ENCODE measurements at regions of chr22 and their contacts with region 1.

Region 1: DNA sequence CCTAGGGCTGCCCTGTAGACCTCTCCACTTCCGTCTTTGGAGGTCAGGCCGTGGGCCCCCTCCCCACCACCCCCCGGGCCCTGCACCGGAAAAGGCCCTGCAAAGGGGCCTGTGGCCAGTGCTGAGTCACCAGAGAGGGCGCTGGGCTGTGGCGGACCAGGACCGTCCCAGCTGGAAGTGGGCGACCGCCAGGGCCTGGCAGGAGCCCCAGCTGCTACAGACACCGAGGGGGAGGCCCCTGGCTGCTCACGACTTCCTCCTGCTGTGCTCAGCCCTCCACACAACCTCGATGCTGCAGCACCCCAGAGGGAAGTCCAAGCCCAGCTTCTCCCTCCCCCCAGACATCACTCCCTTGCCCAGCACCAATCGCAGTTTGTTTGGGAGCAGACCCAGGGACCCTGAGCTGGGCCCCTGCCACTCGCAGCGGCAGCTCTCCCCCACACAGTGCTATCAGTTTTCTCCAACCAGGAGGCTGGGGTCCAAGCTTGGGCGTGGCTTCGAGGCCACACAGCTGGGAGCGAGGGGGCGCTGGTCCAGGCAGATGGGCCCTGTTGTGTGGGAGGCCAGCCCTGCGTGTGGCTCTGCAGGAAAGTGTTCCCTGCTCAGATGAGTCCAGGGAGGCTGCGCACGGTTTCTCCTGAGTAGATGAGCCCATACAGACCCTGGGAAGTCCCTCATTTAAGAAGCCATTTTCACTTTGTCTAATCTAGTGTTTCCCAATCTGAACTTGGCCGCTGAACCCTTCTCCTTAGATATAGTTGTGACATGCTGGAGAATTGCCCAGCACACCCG is 5.6 kb upstream of the SH3BP1 start:
- DNase-seq: peak; percentile 74
- H3K4me3 Mint-ChIP-seq: peak overlapping the region; percentile 64
- H3K27ac Mint-ChIP-seq: peak overlapping the region; percentile 95
- H3K4me1 Mint-ChIP-seq: peaks cover 72% of the 10 kb centered on the region
- H3K27me3 Mint-ChIP-seq: no peaks in the 10 kb centered on the region

Region 2: DNA sequence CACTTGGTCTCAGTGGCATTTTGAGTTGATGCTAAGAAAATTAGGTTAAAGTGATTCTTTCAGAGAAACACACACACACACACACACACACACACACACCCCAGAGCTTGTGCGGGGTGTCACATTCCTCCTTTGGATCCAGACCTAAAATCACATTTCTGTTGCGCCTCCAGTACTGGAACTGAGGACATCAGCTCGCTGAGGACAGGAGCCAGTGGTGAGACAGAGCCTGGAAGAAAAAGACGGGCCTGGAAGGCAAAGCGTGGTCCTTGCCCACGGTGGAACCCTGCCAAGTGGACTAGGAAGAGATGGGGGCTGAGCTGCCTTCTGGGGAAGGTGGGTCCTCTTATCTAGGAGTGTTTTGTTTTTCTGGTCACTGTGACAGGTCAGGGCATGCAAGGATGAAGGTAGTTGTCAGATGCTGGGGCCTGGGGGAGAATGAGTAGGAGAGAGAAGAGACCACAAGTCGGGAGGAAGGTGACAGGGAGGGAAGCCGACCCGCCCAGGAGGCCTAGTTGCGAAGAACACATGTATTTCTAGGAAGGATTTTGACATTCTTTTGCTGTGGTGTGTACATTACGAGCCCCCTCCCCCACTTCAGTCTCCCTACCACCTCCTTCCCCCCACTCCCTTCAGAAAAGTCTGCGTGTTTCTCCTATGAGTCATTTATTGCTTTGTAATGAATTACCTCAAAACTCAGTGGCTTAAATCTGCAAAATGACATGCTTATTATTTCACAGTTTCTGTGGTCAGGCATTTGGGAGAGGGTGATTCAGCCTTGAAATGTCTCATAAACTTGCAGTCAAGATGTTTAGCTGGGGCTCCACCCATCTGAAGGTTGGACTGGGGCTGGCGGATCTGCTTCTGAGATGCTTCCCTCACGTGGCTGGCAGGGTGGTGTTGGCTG is 201.8 kb before region 1 on chr22:
- CTCF ChIA-PET with region 1: no interaction called
- POLR2A ChIA-PET with region 1: no interaction called
- DNase-seq: peak; percentile 54
- H3K4me3 Mint-ChIP-seq: no peak overlapping the region
- H3K27ac Mint-ChIP-seq: peak overlapping the region; percentile 74
- H3K4me1 Mint-ChIP-seq: peaks cover 36% of the 10 kb centered on the region
- H3K27me3 Mint-ChIP-seq: peaks cover 28% of the 10 kb centered on the region

Region 3: DNA sequence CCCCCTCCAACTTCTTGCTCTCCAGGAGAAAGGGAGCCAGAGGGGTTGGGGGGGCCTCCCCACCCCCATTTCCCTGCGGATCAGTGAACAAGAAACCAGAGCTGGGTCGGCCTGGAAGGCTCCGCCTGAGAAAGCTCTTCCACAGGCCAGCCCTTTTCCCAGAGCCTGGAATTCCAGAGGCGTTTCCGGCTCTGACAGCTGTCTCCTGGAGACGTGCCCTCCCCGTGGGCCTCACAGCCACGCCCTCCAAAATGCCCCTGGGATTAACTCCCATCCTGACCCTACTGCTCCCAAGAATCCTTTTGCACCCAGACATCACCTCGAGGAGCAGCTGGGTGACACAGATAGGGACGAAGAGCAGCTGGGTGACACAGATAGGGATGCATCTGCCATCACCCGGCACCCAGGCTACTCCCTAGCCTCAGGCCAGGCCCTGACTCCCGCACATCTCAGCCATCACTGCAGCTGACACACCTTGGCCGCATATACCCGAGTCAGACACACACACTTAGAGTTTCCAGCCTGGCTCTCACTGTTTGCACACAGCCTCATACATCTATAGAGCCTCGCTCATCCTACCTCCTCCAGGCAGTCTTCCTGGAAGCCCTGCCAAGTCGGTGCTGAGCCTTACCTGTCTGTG is 81.2 kb before region 1 on chr22:
- CTCF ChIA-PET with region 1: no interaction called
- POLR2A ChIA-PET with region 1: no interaction called
- DNase-seq: no peak
- H3K4me3 Mint-ChIP-seq: no peak overlapping the region
- H3K27ac Mint-ChIP-seq: no peak overlapping the region
- H3K4me1 Mint-ChIP-seq: peaks cover 3% of the 10 kb centered on the region
- H3K27me3 Mint-ChIP-seq: peaks cover 41% of the 10 kb centered on the region

Region 4: DNA sequence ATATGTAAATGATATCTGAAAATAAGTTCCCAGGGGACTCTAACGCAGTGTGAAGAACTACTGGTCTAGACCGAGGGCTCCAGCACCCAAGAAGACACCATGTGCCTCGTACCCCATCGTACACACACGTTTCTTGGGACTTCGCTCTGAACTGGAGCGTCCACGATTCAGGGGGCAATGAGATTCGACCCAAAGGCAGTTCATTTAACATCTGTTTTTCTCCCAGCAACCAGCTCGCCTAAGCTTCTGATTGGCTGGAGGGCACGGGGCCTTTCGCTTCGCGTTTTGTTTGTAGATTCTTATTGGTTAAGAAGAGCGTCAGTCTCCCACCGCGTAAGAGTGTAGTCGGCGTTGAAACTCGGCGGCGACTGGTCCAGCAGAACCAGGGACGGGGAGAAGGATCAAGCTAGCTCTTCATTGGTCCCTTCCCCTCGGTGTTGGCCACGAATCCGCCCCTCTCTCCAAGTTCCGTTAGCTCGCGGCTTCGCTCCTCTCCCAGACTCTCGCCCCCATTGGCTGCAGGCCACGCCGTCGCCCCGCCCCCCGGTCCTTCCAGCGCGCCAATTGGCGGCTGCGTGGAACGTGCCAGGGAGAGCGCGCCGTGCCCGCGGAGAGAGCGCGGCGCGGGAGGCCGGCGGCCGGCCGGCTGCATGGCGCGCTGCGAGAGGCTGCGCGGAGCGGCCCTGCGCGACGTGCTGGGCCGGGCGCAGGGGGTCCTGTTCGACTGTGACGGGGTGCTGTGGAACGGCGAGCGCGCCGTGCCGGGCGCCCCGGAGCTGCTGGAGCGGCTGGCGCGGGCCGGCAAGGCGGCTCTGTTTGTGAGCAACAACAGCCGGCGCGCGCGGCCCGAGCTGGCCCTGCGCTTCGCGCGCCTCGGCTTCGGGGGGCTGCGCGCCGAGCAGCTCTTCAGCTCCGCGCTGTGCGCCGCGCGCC is 24.6 kb after region 1 on chr22 and contains the start of gene PDXP:
- CTCF ChIA-PET with region 1: interaction called, 45 read pairs
- POLR2A ChIA-PET with region 1: interaction called, 126 read pairs
- DNase-seq: peak; percentile 98
- H3K4me3 Mint-ChIP-seq: peak within 1 kb of the TSS; percentile 84
- H3K27ac Mint-ChIP-seq: peak within 1 kb of the TSS; percentile 80
- H3K4me1 Mint-ChIP-seq: peaks cover 42% of the 10 kb centered on the region
- H3K27me3 Mint-ChIP-seq: no peaks in the 10 kb centered on the region
- total RNA-seq, gene PDXP: 19.1 to 21.6 TPM

Region 5: DNA sequence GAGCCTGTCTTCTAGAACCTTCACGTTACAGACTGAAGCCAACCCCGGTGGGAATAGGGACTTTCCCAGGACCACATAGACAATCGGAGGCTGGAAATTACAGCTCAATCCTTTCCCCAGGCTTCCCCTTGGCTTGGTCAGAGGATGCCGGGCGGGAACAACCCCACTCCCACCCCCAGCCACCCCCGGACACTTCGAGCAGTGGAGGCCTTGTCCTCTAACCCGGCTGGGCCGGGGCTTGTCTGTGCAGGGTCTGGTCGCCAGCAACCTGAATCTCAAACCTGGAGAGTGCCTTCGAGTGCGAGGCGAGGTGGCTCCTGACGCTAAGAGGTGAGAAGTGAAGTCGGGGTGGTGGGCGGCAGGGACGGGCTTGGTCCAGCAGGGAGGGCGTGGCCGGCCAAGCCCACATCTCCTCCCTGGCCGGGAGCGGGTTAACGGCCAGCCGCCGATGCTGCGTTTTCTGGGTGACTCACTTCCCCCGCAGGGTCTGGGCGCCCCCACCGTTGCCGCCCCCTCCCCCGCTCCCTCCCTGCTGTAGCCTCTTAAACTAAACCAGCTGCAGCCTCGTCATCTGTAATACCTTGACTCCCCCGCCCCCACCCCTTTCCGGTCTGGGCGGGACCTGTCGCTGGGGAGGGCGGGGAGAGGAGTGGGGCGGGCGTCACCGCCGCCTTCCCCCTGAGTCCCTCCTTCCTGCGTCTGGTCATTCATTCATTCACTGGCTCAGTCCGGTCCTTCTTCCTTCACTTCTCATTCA is 43.1 kb after region 1 on chr22:
- CTCF ChIA-PET with region 1: interaction called, 301 read pairs
- POLR2A ChIA-PET with region 1: interaction called, 118 read pairs
- DNase-seq: peak; percentile 96
- H3K4me3 Mint-ChIP-seq: peak overlapping the region; percentile 88
- H3K27ac Mint-ChIP-seq: peak overlapping the region; percentile 99
- H3K4me1 Mint-ChIP-seq: peaks cover 62% of the 10 kb centered on the region
- H3K27me3 Mint-ChIP-seq: no peaks in the 10 kb centered on the region

Region 6: DNA sequence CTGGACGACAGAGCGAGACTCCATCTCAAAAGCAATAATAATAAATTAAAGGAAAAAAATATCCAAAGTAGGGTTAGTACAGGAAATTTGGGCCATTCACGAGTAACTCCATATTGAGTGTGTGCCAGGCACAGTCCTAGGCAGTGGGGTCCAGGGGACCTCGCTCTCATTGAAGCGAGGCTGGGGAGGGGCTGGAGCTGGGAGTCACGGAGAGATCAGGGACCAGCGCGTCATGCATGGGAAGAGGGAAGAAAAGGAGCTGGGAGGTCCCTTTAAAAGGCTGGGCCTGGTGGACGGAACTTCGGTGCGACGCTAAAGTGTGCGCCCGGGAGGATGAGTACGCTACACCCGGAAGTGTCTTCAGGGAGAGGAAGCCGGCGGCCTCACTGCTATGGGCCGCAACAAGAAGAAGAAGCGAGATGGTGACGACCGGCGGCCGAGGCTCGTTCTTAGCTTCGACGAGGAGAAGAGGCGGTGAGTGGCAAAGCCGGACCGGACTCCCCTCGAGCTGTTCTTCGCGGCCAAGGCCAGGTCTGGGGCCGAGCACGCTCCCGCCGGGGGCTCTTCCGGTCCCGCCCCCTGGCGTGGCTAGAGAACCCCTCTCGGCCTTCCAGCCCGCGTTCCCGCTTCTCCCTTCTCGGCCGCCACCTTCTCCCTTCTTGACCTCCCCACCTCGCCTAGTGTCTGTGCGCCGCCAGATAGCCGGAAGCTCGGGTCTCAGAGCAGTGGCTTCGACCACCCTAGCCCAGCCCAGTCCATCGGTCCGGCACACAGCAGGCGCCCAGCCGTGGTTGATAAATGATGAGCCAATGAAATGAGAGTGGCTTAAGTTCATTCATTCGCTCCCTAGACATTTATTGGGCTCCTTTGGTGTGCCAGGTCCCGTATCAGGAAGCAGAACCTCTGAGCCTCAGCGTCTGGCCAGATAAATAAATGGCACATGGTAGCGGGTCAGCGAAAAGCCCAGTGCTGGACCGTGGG is 52.5 kb after region 1 on chr22 and contains the start of gene NOL12:
- CTCF ChIA-PET with region 1: interaction called, 301 read pairs
- POLR2A ChIA-PET with region 1: interaction called, 59 read pairs
- DNase-seq: peak; percentile 81
- H3K4me3 Mint-ChIP-seq: peak within 1 kb of the TSS; percentile 93
- H3K27ac Mint-ChIP-seq: peak within 1 kb of the TSS; percentile 88
- H3K4me1 Mint-ChIP-seq: peaks cover 28% of the 10 kb centered on the region
- H3K27me3 Mint-ChIP-seq: no peaks in the 10 kb centered on the region
- total RNA-seq, gene NOL12: 36.6 to 36.9 TPM